ENCODE measurements at regions of chr2 and their contacts with region 1.

Region 1: GRCh38 chr2:86221066-86221684 is 21.9 kb downstream of the MRPL35 start:
- DNase-seq: peak in 1 of 2 experiments; percentile 30
- H3K4me3 ChIP-seq: no peak overlapping the region
- H3K27ac ChIP-seq: no peak overlapping the region
- H3K4me1 ChIP-seq: no peaks in the 10 kb centered on the region
- H3K27me3 ChIP-seq: 0 out of 2 replicates have a peak, but pooled peaks cover 3% of the 10 kb centered on the region
- CTCF ChIP-seq: peak; percentile 86

Region 2: DNA sequence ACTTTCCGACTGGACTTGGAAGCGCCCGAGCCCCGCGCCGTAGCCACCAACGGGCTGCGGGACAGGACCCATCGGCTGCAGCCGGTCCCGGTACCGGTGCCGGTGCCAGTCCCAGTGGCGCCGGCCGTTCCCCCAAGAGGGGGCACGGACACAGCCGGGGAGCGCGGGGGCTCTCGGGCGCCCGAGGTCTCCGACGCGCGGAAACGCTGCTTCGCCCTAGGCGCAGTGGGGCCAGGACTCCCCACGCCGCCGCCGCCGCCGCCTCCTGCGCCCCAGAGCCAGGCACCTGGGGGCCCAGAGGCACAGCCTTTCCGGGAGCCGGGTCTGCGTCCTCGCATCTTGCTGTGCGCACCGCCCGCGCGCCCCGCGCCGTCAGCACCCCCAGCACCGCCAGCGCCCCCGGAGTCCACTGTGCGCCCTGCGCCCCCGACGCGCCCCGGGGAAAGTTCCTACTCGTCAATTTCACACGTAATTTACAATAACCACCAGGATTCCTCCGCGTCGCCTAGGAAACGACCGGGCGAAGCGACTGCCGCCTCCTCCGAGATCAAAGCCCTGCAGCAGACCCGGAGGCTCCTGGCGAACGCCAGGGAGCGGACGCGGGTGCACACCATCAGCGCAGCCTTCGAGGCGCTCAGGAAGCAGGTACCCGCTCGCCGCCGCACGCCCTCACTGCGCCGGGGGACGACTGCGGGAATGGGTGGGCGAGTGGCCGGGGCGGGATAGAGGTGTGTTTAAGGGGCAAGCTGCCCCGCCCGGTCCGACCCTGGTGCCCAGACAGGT is 466.7 kb before region 1 on chr2:
- CTCF ChIA-PET with region 1: no interaction called
- POLR2A ChIA-PET with region 1: no interaction called
- intact Hi-C with region 1: no loop called
- DNase-seq: no peak
- H3K4me3 ChIP-seq: peak overlapping the region; percentile 54; the same call in 1 of the 2 replicates
- H3K27ac ChIP-seq: no peak overlapping the region
- H3K4me1 ChIP-seq: no peaks in the 10 kb centered on the region
- H3K27me3 ChIP-seq: peaks cover 58% of the 10 kb centered on the region
- CTCF ChIP-seq: no peak

Region 3: DNA sequence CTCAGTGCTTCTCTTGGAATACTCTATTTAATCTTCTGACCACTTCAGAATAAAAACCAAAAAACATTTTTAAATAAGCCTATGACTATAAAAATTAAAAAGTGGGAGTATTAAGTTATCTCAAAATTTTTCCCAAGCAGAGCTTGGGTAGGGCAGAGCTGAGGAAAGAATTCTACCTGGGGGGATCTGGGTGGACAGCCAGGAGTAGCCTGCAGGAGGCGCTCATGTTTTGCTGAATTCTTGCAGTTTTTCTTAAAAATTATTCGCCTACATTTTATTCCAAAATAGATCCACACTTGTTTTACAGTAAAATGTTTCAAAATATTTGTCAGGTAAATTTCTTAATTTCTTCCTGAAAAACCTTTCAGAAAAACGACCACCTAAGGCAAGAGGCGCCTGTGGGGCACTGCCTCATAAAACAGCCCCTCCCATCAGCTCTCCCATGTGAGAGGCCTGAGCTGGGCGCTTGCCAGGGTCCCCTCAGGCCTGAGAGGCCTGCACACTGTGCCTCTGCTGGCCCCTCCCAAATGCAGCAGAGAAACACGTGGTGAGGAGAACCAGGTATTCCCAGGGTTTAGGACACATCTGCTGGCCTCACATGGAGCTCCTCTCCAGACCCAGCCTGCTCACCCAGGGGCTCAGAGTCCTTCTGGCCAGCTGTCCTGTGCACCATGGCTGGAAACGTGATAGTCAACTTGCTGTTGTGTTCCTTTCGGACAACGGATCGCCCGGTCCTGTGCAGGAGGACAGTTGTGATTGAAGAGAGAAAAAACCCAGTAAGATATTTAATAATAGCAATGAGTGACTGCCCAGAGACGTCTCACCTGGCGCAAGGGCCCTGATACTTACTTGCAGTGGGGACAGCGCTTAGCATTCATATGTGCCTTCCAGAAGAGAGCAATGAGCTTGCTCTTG is 133.0 kb before region 1 on chr2:
- CTCF ChIA-PET with region 1: no interaction called
- POLR2A ChIA-PET with region 1: no interaction called
- intact Hi-C with region 1: no loop called
- DNase-seq: no peak
- H3K4me3 ChIP-seq: no peak overlapping the region
- H3K27ac ChIP-seq: no peak overlapping the region
- H3K4me1 ChIP-seq: no peaks in the 10 kb centered on the region
- H3K27me3 ChIP-seq: no peaks in the 10 kb centered on the region
- CTCF ChIP-seq: peak; percentile 56; the same call in 1 of the 2 replicates

Region 4: DNA sequence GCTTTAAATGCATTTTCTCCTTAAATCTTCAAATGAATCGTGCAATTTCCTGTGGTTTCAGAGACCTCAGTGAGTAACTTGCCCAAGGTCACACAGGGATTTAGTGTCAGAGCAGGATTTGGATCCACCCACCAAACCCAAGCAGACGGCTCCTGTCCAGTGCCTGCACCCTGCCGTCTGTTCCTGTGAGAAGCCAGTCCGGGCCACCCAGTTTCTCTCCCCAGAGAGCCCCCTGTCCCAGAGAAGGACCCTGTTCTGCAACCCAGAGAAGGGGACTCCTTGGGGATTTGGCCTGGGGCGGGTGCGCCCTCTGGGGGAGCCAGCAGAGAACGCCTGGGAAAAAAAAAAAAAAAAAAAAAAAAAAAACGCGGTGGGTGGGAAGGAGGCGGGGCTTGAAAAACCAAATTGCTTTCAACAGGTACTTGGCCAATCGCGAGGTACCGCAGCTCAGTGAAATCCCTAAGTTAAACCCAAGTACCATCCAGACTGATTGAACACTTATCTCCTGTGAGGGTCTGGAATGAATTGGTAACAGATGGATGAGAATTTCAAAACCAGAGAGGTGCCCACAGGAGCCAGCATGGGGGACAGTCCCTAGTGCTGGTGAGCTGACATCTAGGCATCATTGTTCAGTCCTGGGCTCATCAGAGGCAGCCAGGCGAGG is 147.1 kb after region 1 on chr2:
- CTCF ChIA-PET with region 1: no interaction called
- POLR2A ChIA-PET with region 1: no interaction called
- intact Hi-C with region 1: loop called (anchors 1 kb)
- DNase-seq: peak; percentile 36 to 44
- H3K4me3 ChIP-seq: peak overlapping the region; percentile 44; the same call in 1 of the 2 replicates
- H3K27ac ChIP-seq: no peak overlapping the region
- H3K4me1 ChIP-seq: peaks cover 4% of the 10 kb centered on the region
- H3K27me3 ChIP-seq: no peaks in the 10 kb centered on the region
- CTCF ChIP-seq: peak; percentile 71

Measured in PC-9 (cell line).